ENCODE measurements at regions of chr10 and their contacts with region 1.

Region 1: GRCh38 chr10:43396928-43397624 is 11.9 kb downstream of the HNRNPF start:
- DNase-seq: peak; percentile 90
- ATAC-seq: peak; percentile 81
- H3K4me3 ChIP-seq: peak overlapping the region; percentile 46 to 75 (median 61)
- H3K4me3 Mint-ChIP-seq: peak overlapping the region; percentile 95
- H3K27ac ChIP-seq: peak overlapping the region; percentile 85 to 97
- H3K27ac Mint-ChIP-seq: peak overlapping the region; percentile 96
- H3K4me1 ChIP-seq: peaks cover 68 to 79% of the 10 kb centered on the region in 2 donors
- H3K4me1 Mint-ChIP-seq: peaks cover 73% of the 10 kb centered on the region
- H3K27me3 ChIP-seq: no peaks in the 10 kb centered on the region
- H3K27me3 Mint-ChIP-seq: no peaks in the 10 kb centered on the region
- CTCF ChIP-seq: no peak

Region 2: DNA sequence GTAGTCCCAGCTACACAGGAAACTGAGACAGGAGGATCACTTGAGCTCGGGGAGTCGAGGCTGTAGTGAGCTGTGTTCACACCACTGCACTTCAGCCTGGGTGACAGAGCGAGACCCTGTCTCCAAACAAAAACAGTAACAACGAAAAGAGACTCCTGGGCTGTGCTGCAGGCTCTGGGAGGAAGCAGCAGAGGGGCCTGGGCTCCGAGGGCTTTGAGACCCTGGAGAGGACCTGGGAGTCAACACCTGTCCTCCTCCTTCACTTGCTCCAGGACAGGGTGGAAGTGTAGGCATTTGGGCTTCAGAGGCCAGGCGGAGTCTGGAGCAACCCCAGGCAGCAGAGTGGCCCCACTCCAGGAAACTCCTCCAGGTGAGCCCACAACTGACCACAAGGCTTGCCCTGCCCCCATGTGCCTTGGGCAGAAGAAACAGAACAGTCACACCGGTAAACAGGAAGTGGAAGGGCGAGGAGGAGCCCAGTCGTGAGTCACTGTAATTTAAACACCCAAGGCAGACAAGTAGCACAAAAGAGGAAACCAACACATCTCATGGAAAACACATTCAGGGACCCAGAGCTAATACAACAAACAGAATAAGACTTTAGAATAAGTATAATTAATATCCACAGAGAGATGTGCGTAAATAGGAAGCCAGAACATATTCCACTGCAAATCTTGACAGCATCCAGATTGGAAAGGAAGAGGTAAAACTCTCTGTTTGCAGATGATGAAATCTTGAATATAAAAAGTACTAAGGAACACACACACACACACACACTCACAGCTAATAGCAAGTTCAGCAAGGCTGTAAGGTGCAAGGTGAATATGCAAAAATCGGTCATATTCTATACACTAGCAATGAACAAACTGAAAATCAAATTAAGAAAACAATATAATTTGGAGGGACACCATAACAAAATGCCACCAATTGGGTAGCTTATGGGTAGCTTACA is 109.7 kb before region 1 on chr10:
- CTCF ChIA-PET with region 1: no interaction called
- POLR2A ChIA-PET with region 1: no interaction called
- intact Hi-C with region 1: no loop called
- DNase-seq: peak; percentile 30
- ATAC-seq: peak; percentile 81
- H3K4me3 ChIP-seq: no peak overlapping the region
- H3K4me3 Mint-ChIP-seq: peak overlapping the region; percentile 15
- H3K27ac ChIP-seq: peak overlapping the region in 1 of 2 donors; percentile 23
- H3K27ac Mint-ChIP-seq: peak overlapping the region; percentile 2
- H3K4me1 ChIP-seq: peaks cover 14 to 19% of the 10 kb centered on the region in 2 donors
- H3K4me1 Mint-ChIP-seq: peaks cover 16% of the 10 kb centered on the region
- H3K27me3 ChIP-seq: peaks cover 0 to 8% (median 4%) of the 10 kb centered on the region in 4 experiments
- H3K27me3 Mint-ChIP-seq: peaks cover 11% of the 10 kb centered on the region
- CTCF ChIP-seq: no peak

Region 3: DNA sequence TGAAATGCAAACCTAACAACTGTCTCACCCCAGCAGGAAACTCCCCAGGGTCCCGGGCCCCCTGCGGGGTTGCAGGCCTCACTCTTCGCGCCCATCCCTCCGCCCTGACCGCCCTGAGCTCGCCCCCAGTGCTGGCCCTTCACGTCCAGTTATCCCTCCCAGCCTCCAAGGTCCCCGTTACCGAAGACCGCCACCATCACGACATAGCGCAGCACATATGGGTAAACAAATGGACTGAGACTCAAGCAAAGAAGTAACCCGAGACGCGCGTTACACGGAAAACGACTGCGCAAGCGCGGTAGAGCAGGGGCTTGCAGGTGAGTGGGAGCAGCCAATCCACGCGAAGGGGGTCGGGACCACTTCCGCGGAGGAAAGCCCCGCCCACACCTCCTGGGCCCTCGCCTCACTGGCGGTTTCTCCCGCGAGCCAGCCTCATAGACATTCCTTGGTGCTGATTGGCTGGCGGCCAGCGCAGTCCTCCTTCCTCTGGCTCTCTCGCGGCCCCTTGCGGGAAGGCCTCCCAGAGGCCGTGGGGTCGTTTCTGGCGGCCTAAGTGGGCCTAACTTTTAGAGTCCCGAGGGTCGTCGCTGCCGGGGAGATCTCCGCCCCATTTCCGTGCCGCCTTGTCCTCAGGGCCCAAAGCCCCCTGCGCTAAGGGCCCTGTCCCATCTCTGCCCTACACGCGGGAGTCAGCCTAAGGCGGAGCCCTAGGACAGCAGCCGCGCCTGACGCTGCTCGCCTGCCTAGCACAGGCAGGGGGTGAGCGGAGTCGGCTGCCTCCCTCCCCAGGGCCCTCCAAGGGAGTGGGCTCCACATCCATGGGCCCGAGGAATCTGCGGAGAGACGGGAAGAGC is 34.9 kb before region 1 on chr10:
- CTCF ChIA-PET with region 1: no interaction called
- POLR2A ChIA-PET with region 1: interaction called, 3 read pairs
- intact Hi-C with region 1: loop called (anchors 2 kb)
- DNase-seq: peak; percentile 95
- ATAC-seq: peak; percentile 97
- H3K4me3 ChIP-seq: peak overlapping the region; percentile 66 to 91 (median 74)
- H3K4me3 Mint-ChIP-seq: peak overlapping the region; percentile 97
- H3K27ac ChIP-seq: peak overlapping the region; percentile 78 to 86
- H3K27ac Mint-ChIP-seq: peak overlapping the region; percentile 94
- H3K4me1 ChIP-seq: peaks cover 8 to 19% of the 10 kb centered on the region in 2 donors
- H3K4me1 Mint-ChIP-seq: peaks cover 25% of the 10 kb centered on the region
- H3K27me3 ChIP-seq: no peaks in the 10 kb centered on the region
- H3K27me3 Mint-ChIP-seq: no peaks in the 10 kb centered on the region
- CTCF ChIP-seq: peak; percentile 36

Region 4: DNA sequence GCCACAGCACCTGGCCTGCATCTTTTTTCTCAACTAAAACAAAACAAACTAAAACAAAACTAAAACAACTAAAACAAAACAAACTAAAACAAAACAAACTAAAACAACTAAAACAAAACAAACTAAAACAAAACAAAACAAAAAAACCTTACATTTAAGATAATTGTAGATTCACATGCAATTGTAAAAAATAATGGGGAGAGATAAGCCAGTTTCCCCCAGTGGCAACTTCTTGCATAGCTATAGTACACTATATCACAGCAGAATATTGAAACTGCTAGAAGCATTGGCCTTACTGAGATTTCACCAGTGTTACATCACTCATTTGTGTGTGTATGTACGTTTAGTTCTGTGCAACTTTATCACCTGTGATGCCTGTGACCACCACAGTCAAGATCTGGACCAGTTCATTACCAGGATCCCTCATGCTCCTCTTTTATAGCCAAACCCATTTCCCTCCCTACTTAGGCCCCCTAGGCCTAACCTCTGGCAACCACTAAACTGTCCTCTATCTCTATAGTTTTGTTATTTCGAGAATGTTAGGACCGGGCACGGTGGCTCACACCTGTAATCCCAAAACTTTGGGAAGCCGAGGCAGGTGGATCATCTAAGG is 16.4 kb before region 1 on chr10:
- CTCF ChIA-PET with region 1: interaction called, 3 read pairs
- POLR2A ChIA-PET with region 1: interaction called, 12 read pairs
- intact Hi-C with region 1: no loop called
- DNase-seq: no peak
- ATAC-seq: no peak
- H3K4me3 ChIP-seq: no peak overlapping the region
- H3K4me3 Mint-ChIP-seq: no peak overlapping the region
- H3K27ac ChIP-seq: no peak overlapping the region
- H3K27ac Mint-ChIP-seq: peak overlapping the region; percentile 43
- H3K4me1 ChIP-seq: no peaks in the 10 kb centered on the region
- H3K4me1 Mint-ChIP-seq: peaks cover 1% of the 10 kb centered on the region
- H3K27me3 ChIP-seq: no peaks in the 10 kb centered on the region
- H3K27me3 Mint-ChIP-seq: no peaks in the 10 kb centered on the region
- CTCF ChIP-seq: no peak

Region 5: GRCh38 chr10:43420369-43421200 is 23.5 kb after region 1 on chr10:
- CTCF ChIA-PET with region 1: interaction called, 4 read pairs
- POLR2A ChIA-PET with region 1: interaction called, 10 read pairs
- intact Hi-C with region 1: no loop called
- DNase-seq: peak; percentile 85
- ATAC-seq: peak; percentile 83
- H3K4me3 ChIP-seq: peak overlapping the region; percentile 25 to 80 (median 70)
- H3K4me3 Mint-ChIP-seq: peak overlapping the region; percentile 95
- H3K27ac ChIP-seq: peak overlapping the region; percentile 90 to 95
- H3K27ac Mint-ChIP-seq: peak overlapping the region; percentile 98
- H3K4me1 ChIP-seq: peaks cover 28 to 38% of the 10 kb centered on the region in 2 donors
- H3K4me1 Mint-ChIP-seq: peaks cover 26% of the 10 kb centered on the region
- H3K27me3 ChIP-seq: no peaks in the 10 kb centered on the region
- H3K27me3 Mint-ChIP-seq: no peaks in the 10 kb centered on the region
- CTCF ChIP-seq: peak; percentile 35

Measured in B cell (primary cell).